ENCODE measurements at regions of chr5 and their contacts with region 1.

Region 1: DNA sequence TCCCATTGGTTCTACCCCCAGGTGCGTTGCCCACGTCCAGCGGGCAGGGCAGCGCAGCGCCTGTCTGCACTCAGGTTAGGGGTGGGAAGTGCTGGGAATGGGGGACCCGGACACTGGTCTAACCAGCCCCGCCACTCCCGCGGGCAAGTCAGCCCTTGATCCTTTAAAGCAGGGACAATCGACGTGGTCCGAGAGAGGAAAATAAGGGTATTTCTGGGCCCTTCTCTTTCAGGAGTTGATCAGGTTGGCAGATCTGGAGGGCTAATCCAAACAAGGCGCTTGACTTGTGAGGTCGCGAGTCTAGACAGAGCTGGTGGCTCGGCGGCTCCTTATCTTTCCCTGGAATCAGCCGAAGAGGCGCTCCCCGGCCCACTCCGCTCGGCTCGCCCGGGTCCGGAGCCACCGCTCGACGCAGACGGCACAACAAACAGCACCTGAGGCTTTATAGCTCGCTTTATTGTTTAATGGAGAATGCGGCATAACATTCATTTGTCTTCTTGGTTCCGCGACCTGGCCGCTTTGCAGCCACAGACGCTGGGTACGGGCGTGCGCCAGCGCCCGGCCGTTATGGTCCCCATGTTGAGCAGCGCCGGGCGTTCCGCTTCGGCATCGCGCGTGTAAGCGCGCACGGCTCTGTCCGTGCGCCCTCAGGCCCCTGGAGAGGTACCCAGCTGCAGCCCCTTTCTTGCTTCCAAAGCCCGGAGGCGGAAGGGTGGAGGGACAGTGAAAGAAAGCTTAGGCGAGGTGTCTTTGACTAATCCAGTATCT is 15.8 kb downstream of the ISL1 start:
- DNase-seq: no peak
- H3K4me3 ChIP-seq: peak overlapping the region; percentile 43 to 50
- H3K27ac ChIP-seq: peak overlapping the region; percentile 99
- H3K4me1 ChIP-seq: peaks cover 43% of the 10 kb centered on the region
- H3K27me3 ChIP-seq: no peaks in the 10 kb centered on the region
- CTCF ChIP-seq: no peak
- POLR2A ChIP-seq: no peak

Region 2: GRCh38 chr5:51468196-51468595 is 69.1 kb after region 1 on chr5:
- intact Hi-C with region 1: loop called (anchors 5 kb)
- DNase-seq: no peak
- H3K4me3 ChIP-seq: no peak overlapping the region
- H3K27ac ChIP-seq: peak overlapping the region; percentile 20
- H3K4me1 ChIP-seq: no peaks in the 10 kb centered on the region
- H3K27me3 ChIP-seq: no peaks in the 10 kb centered on the region
- CTCF ChIP-seq: no peak
- POLR2A ChIP-seq: no peak

Measured in vagina (tissue), 2 donors.